Activated CD8-positive, alpha-beta memory T cell treated with anti-CD3 and anti-CD28 coated beads, Interleukin-2, amount 10 ng/mL, durations not matched to agents 7 days and 5 days (primary cell): ENCODE measurements at regions of chr9 and their contacts with region 1.

Region 1: GRCh38 chr9:35696525-35697215 is 6.9 kb upstream of the TPM2 start:
- DNase-seq: peak; percentile 72
- ATAC-seq: peak; percentile 92
- H3K4me3 Mint-ChIP-seq: no peak overlapping the region
- H3K27ac Mint-ChIP-seq: no peak overlapping the region
- H3K4me1 Mint-ChIP-seq: peaks cover 2% of the 10 kb centered on the region
- H3K27me3 Mint-ChIP-seq: no peaks in the 10 kb centered on the region

Region 2: DNA sequence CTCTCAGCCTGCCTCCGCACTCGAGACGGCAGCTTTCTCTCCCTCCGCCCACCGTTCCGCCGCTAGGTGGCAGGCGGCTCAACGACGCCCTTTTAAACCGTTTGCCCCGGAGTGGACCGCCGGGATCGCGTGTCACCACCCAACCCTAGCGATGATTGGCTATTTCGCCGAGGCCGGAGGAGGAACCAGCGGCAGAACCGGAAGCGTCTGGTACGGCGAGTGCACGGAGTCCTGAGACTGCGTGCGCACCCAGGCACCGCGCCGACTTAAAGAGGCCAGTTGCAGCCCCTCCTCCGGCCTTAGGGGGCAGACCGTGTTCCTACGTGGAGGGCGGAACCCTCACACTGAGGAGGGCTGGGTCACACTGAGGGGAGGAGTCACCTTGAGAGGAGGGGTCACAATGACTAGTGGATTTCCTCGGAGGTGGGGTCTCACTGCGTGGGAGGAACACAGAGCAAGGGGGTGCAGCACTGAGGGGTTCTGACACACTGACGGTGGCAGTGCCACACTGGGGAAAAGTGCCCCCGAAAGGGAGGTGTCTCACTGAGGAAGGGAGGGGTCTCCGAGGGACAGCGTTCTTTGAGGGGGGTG is 92.6 kb before region 1 on chr9:
- CTCF ChIA-PET with region 1: interaction called, 28 read pairs
- DNase-seq: peak; percentile 100
- ATAC-seq: peak; percentile 89
- H3K4me3 Mint-ChIP-seq: peak overlapping the region; percentile 88
- H3K27ac Mint-ChIP-seq: peak overlapping the region; percentile 98
- H3K4me1 Mint-ChIP-seq: peaks cover 30% of the 10 kb centered on the region
- H3K27me3 Mint-ChIP-seq: no peaks in the 10 kb centered on the region

Region 3: DNA sequence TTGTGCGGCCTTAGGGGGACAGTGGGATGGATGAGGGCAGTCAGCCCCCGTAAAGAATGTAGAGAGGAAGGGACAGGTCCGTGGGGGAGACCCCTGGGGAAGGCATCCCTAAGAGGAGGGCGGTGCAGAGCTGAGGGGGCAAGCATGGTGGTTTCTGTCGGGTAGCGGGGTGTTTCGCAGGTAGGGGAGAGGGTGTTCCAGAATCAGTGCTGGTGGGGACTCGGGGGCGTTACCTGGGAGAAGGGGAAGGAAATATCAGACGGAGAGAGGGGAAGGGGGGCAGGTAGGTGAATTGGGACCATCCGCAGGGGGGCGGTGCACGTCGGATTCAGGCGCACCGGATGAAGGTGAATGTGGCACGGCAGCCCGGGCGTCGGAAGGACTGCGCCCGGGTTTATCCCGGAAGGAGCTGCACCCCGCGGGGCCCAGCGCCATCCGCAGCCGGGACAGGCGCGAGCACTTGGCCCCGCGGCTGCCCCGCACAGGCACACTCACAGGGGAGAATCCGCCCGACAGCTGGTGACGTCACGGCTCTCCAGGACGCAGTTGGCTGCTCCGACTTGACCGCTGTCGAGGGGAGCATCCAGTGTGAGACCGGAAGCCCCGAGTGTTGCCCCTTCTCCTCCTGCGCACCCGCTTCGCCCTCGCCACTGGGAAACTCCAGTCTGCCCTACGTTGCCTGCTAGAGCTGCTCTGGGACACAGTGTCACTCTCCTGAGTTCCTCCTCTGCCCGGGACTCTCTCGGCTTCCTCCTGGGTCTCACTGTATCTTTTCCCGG is 79.8 kb before region 1 on chr9:
- CTCF ChIA-PET with region 1: interaction called, 26 read pairs
- DNase-seq: peak; percentile 88
- ATAC-seq: peak; percentile 72
- H3K4me3 Mint-ChIP-seq: peak overlapping the region; percentile 78
- H3K27ac Mint-ChIP-seq: peak overlapping the region; percentile 80
- H3K4me1 Mint-ChIP-seq: peaks cover 51% of the 10 kb centered on the region
- H3K27me3 Mint-ChIP-seq: no peaks in the 10 kb centered on the region

Region 4: GRCh38 chr9:35646533-35647265 is 50.0 kb before region 1 on chr9:
- CTCF ChIA-PET with region 1: interaction called, 27 read pairs
- DNase-seq: peak; percentile 95
- ATAC-seq: peak; percentile 90
- H3K4me3 Mint-ChIP-seq: peak overlapping the region; percentile 99
- H3K27ac Mint-ChIP-seq: peak overlapping the region; percentile 97
- H3K4me1 Mint-ChIP-seq: peaks cover 47% of the 10 kb centered on the region
- H3K27me3 Mint-ChIP-seq: no peaks in the 10 kb centered on the region

Region 5: DNA sequence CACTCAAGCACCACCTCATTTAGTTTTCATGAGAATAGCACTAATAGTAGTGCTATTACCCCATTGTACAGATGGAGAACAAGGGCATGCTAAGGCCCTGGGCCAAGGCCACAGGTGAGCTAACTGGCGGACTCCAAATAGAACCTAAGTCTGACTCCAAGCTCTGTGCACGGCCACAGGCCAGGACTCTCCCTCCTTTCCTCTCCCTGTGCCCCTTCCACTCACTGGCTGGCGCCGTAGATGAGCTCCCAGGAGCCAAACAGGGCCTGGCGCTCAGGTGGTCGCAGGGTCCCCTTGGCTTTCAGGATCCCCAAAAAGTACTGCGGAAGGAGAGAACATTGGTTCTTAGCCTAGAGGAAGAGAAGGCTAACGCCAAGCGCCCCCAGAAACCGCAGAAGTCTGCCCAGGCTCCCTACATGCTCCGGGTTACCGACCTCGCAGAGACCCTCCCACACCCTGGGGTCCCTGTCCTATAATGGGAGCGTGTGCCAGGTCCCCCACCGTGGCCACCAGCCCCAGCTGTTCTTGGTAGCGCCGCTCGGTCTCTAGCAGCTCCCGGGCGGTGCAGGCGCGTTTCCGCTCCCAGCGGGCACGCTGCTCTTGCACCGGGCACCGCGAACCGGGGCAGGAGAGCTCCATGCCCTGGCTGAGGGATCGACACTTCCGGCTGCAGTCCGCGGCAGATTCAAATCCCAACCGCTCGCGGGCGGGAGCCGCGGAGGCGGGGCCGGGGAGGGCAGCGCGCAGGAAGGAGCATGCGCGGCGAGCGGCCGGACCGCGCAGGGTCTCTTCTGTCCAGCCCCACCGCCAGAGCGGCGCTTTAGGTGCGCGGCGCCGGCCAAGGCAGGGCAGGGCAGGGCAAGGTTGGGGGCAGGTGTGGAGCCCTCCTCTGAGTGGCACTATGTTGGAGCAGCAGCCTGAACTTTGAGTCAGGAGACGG is 31.9 kb before region 1 on chr9 and contains the start of gene ARHGEF39:
- CTCF ChIA-PET with region 1: interaction called, 58 read pairs
- DNase-seq: peak; percentile 87
- ATAC-seq: peak; percentile 89
- H3K4me3 Mint-ChIP-seq: peak within 1 kb of the TSS; percentile 87
- H3K27ac Mint-ChIP-seq: peak within 1 kb of the TSS; percentile 81
- H3K4me1 Mint-ChIP-seq: peaks cover 61% of the 10 kb centered on the region
- H3K27me3 Mint-ChIP-seq: no peaks in the 10 kb centered on the region
- total RNA-seq, gene ARHGEF39: 14.5 to 21.1 TPM

Region 6: GRCh38 chr9:35685506-35685905 is 11.2 kb before region 1 on chr9:
- CTCF ChIA-PET with region 1: interaction called, 22 read pairs
- DNase-seq: no peak
- ATAC-seq: no peak
- H3K4me3 Mint-ChIP-seq: no peak overlapping the region
- H3K27ac Mint-ChIP-seq: no peak overlapping the region
- H3K4me1 Mint-ChIP-seq: peaks cover 11% of the 10 kb centered on the region
- H3K27me3 Mint-ChIP-seq: no peaks in the 10 kb centered on the region

Region 7: DNA sequence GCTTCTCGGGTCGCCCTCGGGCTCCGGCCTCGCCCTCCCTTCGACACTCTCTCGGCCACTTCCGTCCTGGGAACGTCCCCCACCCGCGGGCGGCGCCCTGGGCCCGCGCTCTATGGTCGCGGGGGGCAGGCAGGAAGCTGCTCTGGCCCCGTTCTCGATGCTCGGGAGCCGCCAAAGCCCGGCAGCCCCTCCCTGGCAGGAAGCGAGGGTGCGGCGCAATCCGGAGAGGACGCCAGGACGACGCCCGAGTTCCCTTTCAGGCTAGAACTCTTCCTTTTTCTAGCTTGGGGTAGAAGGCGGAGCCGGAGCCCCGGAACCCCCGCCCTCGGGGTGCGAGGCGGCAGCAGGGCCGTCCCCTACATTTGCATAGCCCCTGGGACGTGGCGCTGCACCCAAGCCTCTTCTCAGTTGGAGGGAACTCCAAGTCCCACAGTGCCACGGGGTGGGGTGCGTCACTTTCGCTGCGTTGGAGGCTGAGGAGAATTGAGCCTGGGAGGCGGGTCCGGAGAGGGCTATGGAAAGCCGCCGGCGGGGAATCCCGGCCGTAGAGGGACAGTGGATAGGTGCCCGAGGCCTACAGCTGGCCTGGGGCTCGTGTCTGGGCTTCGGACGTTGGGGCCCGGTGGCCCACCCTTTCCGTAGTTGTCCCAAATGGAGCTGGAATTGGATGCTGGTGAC is 35.6 kb after region 1 on chr9 and contains the starts of genes CREB3 and TLN1:
- CTCF ChIA-PET with region 1: interaction called, 68 read pairs
- DNase-seq: peak; percentile 99
- ATAC-seq: peak; percentile 90
- H3K4me3 Mint-ChIP-seq: no peak within 1 kb of the TSS
- H3K27ac Mint-ChIP-seq: peak within 1 kb of the TSS; percentile 87
- H3K4me1 Mint-ChIP-seq: peaks cover 23% of the 10 kb centered on the region
- H3K27me3 Mint-ChIP-seq: no peaks in the 10 kb centered on the region
- total RNA-seq, gene CREB3: 20.5 to 24.7 TPM
- total RNA-seq, gene TLN1: 372 to 374 TPM

Region 8: DNA sequence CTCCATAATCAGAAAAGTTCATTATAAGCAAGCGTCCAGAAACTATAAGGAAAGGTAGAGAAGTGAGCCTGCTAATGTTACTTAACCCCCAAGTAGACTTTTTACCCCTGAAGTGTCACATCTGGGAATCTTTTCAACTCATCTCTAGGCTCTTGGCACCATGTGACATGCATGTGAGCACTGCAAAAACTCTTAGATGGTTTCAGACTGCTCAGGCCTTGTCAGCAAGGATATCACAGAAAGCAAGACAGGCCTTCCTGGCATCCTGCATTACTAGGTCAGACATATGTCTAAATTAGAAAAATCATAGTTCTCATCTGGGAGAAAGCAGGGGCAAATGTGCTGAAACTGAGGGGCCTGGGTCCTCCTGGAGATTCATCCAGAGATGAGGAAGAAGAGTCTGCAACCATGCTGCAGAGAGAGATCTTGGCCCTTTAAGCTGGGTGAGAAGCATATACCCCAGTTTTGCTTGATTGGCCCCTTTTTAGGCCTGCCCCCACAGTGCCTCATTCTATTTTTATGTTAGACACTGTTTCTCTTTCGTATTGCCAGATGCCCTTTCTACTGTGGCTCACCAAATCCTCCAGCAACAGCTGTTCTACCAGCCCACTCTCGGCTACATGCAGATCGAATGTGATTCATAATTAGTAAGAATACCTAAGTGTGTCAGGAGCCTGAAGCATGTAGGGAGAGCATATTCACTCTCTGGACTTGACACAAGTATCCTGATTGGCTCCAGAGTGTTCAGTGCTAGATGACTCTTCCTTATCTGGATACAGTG is 151.3 kb after region 1 on chr9:
- CTCF ChIA-PET with region 1: no interaction called
- DNase-seq: peak; percentile 59
- ATAC-seq: peak; percentile 78
- H3K4me3 Mint-ChIP-seq: no peak overlapping the region
- H3K27ac Mint-ChIP-seq: peak overlapping the region; percentile 39
- H3K4me1 Mint-ChIP-seq: peaks cover 31% of the 10 kb centered on the region
- H3K27me3 Mint-ChIP-seq: no peaks in the 10 kb centered on the region